ENCODE measurements at regions of chr3 and their contacts with region 1.

Region 1: GRCh38 chr3:191412759-191413158 is 48.2 kb upstream of the PYDC2 start:
- DNase-seq: peak; percentile 80
- H3K4me3 ChIP-seq: no peak overlapping the region
- H3K27ac ChIP-seq: no peak overlapping the region
- H3K4me1 ChIP-seq: peaks cover 11% of the 10 kb centered on the region
- H3K27me3 ChIP-seq: no peaks in the 10 kb centered on the region
- CTCF ChIP-seq: no peak

Region 2: GRCh38 chr3:191499307-191500080 is 86.7 kb after region 1 on chr3:
- CTCF ChIA-PET with region 1: no interaction called
- dilution Hi-C with region 1: no loop called
- in situ Hi-C with region 1: no loop called
- intact Hi-C with region 1: loop called (anchors 5 kb)
- DNase-seq: peak; percentile 65
- H3K4me3 ChIP-seq: peak overlapping the region; percentile 13 to 49 (median 31)
- H3K27ac ChIP-seq: no peak overlapping the region
- H3K4me1 ChIP-seq: peaks cover 14% of the 10 kb centered on the region
- H3K27me3 ChIP-seq: no peaks in the 10 kb centered on the region
- CTCF ChIP-seq: no peak

Region 3: DNA sequence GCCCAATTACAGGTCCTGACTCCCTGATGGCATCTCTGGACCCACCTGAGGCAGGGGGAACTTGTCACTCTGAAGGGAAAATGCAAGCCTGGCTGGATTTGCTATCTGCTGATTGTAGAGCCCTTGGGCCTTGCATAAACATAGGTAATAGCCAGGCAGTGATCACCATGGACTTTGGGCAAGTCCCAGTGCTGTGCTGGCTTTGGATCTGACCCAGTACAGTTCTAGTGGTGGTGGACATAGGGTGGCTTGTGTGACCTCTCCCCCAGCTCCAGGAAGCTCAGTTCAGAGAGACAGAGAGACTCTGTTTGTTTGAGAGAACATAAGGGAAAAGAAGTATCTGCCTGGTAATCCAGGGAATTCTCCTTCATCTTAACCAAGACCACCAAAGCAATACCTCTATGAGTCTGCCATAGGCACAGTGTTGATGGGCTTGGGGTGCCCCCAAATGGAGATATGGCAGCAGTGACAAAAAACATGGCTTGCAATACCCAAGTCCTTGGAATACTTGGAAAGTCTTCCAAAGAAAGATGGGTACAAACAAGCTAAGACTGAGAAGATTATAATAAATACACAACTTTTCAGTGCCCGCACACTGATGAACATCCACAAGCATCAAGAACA is 396.7 kb after region 1 on chr3:
- CTCF ChIA-PET with region 1: no interaction called
- dilution Hi-C with region 1: no loop called
- in situ Hi-C with region 1: no loop called
- intact Hi-C with region 1: loop called (anchors 1 kb)
- DNase-seq: no peak
- H3K4me3 ChIP-seq: no peak overlapping the region
- H3K27ac ChIP-seq: no peak overlapping the region
- H3K4me1 ChIP-seq: no peaks in the 10 kb centered on the region
- H3K27me3 ChIP-seq: no peaks in the 10 kb centered on the region
- CTCF ChIP-seq: peak; percentile 15 to 26

Region 4: GRCh38 chr3:192130534-192131132 is 717.9 kb after region 1 on chr3:
- CTCF ChIA-PET with region 1: no interaction called
- dilution Hi-C with region 1: no loop called
- in situ Hi-C with region 1: no loop called
- intact Hi-C with region 1: loop called (anchors 1 kb)
- DNase-seq: peak; percentile 37
- H3K4me3 ChIP-seq: no peak overlapping the region
- H3K27ac ChIP-seq: no peak overlapping the region
- H3K4me1 ChIP-seq: no peaks in the 10 kb centered on the region
- H3K27me3 ChIP-seq: no peaks in the 10 kb centered on the region
- CTCF ChIP-seq: peak; percentile 84 to 95

Region 5: GRCh38 chr3:192188218-192188835 is 775.6 kb after region 1 on chr3:
- CTCF ChIA-PET with region 1: no interaction called
- dilution Hi-C with region 1: no loop called
- in situ Hi-C with region 1: no loop called
- intact Hi-C with region 1: loop called (anchors 1 kb)
- DNase-seq: peak; percentile 16
- H3K4me3 ChIP-seq: no peak overlapping the region
- H3K27ac ChIP-seq: no peak overlapping the region
- H3K4me1 ChIP-seq: no peaks in the 10 kb centered on the region
- H3K27me3 ChIP-seq: no peaks in the 10 kb centered on the region
- CTCF ChIP-seq: peak; percentile 75 to 80

Region 6: DNA sequence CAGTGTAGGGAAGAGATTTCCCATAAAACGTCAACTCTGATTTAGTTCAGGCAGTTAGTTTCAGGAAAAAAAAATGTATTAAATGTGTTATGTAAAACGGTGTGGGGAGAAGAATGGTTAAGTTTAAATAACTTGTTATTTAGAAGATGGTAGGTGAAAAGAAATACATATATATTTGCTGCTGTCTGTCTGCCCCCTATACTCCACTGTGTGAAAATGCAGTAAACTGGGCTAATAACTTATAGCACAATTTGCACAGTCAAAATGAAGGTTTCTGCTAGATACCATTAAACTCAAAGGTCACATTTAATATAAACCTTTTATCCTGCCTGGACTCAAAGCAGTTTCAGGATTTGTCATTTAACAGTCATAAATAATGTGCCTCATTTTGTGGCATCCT is 799.6 kb after region 1 on chr3:
- CTCF ChIA-PET with region 1: no interaction called
- dilution Hi-C with region 1: no loop called
- in situ Hi-C with region 1: no loop called
- intact Hi-C with region 1: loop called (anchors 1 kb)
- DNase-seq: no peak
- H3K4me3 ChIP-seq: no peak overlapping the region
- H3K27ac ChIP-seq: no peak overlapping the region
- H3K4me1 ChIP-seq: no peaks in the 10 kb centered on the region
- H3K27me3 ChIP-seq: no peaks in the 10 kb centered on the region
- CTCF ChIP-seq: peak in 1 of 2 donors; percentile 35

Region 7: DNA sequence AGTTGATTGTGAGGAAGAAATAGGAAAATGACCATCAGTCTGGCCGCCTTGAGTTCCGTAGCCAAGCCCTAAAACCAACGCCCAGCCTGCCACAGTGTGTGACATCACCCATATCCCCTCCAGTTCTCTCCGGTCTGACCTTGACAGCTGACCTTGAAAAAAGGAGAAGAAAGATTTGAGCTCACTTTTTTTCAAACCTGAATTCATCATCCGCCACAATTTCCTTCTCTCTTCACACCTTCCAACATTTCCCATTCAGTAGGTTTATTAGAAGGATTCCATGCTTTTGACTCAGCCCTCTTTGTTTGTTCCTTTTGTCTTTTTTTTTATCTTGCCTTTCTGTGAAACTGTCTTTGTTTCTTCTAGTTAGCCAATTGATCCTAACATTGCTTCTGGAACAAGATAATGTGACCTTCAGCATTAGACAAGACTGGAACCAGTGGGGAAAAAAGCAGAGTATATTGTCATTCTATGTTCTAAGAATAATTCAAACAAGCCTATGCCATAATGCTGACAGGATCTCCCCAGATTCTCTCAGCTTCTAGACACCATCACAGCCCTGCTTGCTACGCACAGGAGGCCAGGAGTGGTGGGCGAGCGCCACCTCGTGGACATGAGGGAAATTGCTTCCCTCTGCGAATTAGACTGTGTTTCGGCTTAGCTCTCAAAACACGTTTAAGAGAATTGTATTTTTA is 1031.5 kb after region 1 on chr3:
- CTCF ChIA-PET with region 1: no interaction called
- dilution Hi-C with region 1: no loop called
- in situ Hi-C with region 1: loop called (anchors 25 kb)
- intact Hi-C with region 1: loop called (anchors 1 kb)
- DNase-seq: peak; percentile 33
- H3K4me3 ChIP-seq: no peak overlapping the region
- H3K27ac ChIP-seq: no peak overlapping the region
- H3K4me1 ChIP-seq: no peaks in the 10 kb centered on the region
- H3K27me3 ChIP-seq: peaks cover 2% of the 10 kb centered on the region
- CTCF ChIP-seq: peak; percentile 99

Measured in mammary epithelial cell (primary cell).